Dendritic cell treated with granulocyte-macrophage colony-stimulating factor and Interleukin-4, amounts not matched to agents 40 ng/mL and 50 ng/mL, for 4 days (primary cell): ENCODE measurements at regions of chr17 and their contacts with region 1.

Region 1: DNA sequence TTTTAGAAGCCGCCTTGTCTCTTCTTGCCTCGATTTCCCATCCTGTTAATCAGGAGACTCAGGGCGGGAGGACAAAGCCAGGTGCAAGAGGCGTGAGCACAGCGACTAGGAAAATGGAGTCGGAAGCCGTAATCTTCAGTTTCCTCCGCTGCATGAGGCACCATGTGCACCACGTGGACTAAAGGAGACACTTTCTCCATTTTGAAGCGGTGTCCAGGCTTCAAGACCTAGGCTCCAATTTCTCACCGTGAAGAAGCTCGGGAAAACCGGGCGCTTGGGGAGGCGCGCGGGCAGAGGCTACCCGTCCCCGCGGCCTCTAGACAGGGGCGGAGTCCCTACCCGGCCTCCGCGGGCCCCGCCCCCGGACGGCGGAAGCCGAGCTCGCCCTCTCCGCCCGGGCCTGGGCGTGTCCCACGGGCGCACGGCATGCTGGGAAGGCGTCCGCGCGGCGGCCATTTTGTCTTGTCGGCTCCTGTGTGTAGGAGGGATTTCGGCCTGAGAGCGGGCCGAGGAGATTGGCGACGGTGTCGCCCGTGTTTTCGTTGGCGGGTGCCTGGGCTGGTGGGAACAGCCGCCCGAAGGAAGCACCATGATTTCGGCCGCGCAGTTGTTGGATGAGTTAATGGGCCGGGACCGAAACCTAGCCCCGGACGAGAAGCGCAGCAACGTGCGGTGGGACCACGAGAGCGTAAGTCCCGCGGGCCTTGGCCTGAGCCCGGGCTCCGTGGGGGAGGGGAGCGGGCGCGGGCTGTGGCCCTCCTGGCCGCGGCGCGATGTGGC is at the start of gene LUC7L3:
- H3K4me3 Mint-ChIP-seq: peak within 1 kb of the TSS; percentile 99
- H3K27ac Mint-ChIP-seq: peak within 1 kb of the TSS; percentile 97
- H3K4me1 Mint-ChIP-seq: peaks cover 39% of the 10 kb centered on the region
- H3K27me3 Mint-ChIP-seq: no peaks in the 10 kb centered on the region

Region 2: DNA sequence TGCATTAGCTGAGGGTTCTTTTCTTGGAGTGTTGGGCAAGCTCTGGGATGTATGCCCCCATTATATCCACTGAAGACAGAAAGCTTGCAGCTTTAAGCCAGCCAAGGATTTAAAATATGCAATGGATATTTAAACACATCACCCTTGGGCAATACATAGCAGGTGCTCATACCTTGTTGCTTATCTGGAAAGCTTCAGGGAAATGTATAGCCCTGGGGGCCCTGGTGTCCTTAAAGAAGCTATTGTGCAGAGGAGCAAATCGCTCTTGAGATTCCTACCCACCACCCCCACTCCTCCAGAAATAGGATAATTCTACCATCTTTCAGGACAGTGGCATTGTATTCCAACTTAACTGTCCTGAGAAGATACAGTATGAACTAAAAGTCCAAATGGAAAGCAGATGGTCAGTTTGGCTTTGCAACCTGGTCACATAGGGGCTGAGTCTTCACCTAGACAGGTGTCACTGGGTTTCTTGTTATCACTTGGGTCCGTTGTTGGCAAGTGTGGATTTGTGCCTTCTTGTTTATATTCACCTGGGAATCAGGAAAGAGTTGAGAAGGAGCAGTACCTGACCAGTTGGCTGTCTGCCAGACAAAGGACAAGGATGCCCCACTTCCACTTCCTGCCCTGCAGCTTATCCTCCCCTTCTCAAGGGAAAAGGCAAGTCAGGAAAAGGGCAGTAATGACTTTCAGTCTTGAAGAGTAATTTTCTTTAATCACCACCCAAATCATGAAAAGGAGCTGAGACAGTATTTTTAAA is 44.6 kb after region 1 on chr17:
- intact Hi-C with region 1: loop called (anchors 5 kb)
- H3K4me3 Mint-ChIP-seq: no peak overlapping the region
- H3K27ac Mint-ChIP-seq: peak overlapping the region; percentile 96
- H3K4me1 Mint-ChIP-seq: peaks cover 29% of the 10 kb centered on the region
- H3K27me3 Mint-ChIP-seq: peaks cover under 1% of the 10 kb centered on the region